ENCODE measurements at regions of chr2 and their contacts with region 1.

Region 1: GRCh38 chr2:23824777-23825212 is 102.1 kb downstream of the ATAD2B start:
- DNase-seq: no peak
- H3K4me3 ChIP-seq: no peak overlapping the region
- H3K27ac ChIP-seq: no peak overlapping the region
- H3K4me1 ChIP-seq: no peaks in the 10 kb centered on the region
- H3K27me3 ChIP-seq: no peaks in the 10 kb centered on the region
- CTCF ChIP-seq: peak; percentile 30 to 65 (median 52)
- POLR2A ChIP-seq: no peak

Region 2: DNA sequence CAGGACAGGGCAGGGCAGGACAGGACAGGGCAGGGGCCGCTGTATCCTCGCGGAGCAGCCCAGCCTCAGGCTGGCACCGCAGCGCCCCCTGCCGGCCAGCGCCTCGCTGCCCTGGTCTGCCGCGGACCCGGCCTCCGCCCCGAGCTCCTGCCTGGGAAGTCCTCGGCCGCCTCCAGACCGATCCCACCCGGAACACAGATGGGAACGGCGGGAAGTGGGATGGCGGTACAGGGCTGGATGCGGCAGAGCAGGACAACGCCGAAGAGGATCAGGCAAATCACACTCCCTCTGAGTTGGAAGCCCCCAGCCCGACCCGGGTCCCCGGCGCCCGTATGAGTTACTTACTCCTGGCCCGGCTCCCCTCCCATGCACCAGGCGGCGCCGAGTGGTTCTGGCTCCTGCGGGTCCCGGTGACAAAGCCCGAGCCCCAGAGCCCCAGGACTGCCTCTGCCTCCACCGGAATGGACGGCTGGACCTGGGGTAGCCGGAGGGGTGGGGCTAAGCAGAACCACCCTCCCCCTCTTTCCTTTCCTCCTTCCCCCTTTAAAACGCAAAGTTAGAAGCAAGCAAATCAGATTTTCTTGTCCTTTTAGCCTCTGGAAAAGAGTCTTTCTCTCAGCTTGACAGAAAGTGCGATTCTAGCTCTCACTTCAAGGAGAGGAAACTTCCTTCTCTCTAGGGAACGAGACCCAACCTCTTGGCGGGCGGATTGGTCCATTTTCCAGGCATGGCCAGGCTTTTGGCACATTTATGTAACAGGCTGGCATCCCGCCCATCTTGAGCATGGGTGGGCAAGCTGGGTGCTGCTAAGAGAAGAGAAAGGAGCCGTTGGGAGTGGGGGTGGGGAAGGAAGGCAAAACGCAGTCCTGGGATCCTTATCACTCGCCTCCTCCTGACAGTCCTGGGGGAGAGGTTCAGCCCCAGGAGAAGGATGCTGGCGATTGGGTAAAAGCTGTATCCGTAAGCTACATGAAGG is 259.9 kb after region 1 on chr2 and contains the start of gene TP53I3:
- intact Hi-C with region 1: loop called (anchors 10 kb)
- DNase-seq: peak; percentile 91 to 92
- H3K4me3 ChIP-seq: peak within 1 kb of the TSS; percentile 17 to 61 (median 53)
- H3K27ac ChIP-seq: peak within 1 kb of the TSS; percentile 91 to 96 (median 94)
- H3K4me1 ChIP-seq: peaks cover 11 to 24% of the 10 kb centered on the region in 2 donors
- H3K27me3 ChIP-seq: no peaks in the 10 kb centered on the region
- CTCF ChIP-seq: peak; percentile 72 to 99 (median 98)
- POLR2A ChIP-seq: peak; percentile 5 to 85
- total RNA-seq, gene TP53I3: 14.5 to 38.4 (median 31.0) TPM

Measured in thyroid gland (tissue), 4 donors.